ENCODE measurements at regions of chr19 and their contacts with region 1.

Region 1: GRCh38 chr19:15466851-15467733 is 2.7 kb upstream of the RASAL3 start:
- DNase-seq: peak; percentile 84
- H3K4me3 Mint-ChIP-seq: peak overlapping the region; percentile 41
- H3K27ac Mint-ChIP-seq: peak overlapping the region; percentile 93
- H3K4me1 Mint-ChIP-seq: peaks cover 52% of the 10 kb centered on the region
- H3K27me3 Mint-ChIP-seq: no peaks in the 10 kb centered on the region

Region 2: DNA sequence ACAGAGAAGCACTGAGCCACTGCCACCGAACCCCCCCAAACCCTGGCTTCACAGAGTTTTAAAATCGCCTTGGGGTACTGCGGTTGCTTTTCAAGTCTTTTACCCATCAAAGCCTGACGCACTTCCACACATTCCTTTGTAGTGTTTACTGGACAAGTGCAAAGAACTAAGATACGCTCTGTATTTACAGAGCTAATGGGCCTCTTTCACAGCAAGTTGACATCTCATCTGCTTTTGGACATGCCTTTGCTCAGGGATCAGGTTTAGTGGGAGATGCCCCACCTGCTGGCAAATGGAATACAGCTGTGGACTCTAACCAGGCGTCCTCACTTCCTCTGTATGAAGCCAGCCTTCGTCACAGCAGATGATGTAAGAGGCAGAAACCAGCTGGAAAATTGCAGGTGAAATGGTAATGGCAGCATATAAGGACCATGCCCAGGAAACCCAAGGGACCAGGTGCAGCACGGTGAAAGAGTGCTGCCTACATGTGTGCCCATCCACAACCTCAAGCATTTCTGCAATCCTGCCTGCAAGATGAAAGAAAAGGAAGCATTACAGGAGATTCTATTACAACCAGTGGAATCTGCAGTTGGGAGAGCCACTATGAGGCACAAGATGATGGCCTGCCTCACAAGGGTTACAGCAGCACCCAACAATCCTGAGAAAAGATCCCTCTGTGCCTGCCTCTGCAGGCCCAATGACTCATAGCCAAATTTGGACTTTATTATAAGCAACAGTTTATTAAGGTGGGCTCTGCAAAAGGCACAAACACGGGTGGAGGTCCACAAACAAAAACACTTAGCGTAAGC is 169.5 kb before region 1 on chr19:
- CTCF ChIA-PET with region 1: no interaction called
- POLR2A ChIA-PET with region 1: no interaction called
- intact Hi-C with region 1: loop called (anchors 1 kb)
- DNase-seq: peak; percentile 43
- H3K4me3 Mint-ChIP-seq: peak overlapping the region; percentile 33
- H3K27ac Mint-ChIP-seq: peak overlapping the region; percentile 95
- H3K4me1 Mint-ChIP-seq: peaks cover 98% of the 10 kb centered on the region
- H3K27me3 Mint-ChIP-seq: no peaks in the 10 kb centered on the region

Region 3: GRCh38 chr19:15404097-15404779 is 62.9 kb before region 1 on chr19:
- CTCF ChIA-PET with region 1: no interaction called
- POLR2A ChIA-PET with region 1: no interaction called
- intact Hi-C with region 1: no loop called
- DNase-seq: no peak
- H3K4me3 Mint-ChIP-seq: no peak overlapping the region
- H3K27ac Mint-ChIP-seq: no peak overlapping the region
- H3K4me1 Mint-ChIP-seq: peaks cover 30% of the 10 kb centered on the region
- H3K27me3 Mint-ChIP-seq: no peaks in the 10 kb centered on the region

Region 4: DNA sequence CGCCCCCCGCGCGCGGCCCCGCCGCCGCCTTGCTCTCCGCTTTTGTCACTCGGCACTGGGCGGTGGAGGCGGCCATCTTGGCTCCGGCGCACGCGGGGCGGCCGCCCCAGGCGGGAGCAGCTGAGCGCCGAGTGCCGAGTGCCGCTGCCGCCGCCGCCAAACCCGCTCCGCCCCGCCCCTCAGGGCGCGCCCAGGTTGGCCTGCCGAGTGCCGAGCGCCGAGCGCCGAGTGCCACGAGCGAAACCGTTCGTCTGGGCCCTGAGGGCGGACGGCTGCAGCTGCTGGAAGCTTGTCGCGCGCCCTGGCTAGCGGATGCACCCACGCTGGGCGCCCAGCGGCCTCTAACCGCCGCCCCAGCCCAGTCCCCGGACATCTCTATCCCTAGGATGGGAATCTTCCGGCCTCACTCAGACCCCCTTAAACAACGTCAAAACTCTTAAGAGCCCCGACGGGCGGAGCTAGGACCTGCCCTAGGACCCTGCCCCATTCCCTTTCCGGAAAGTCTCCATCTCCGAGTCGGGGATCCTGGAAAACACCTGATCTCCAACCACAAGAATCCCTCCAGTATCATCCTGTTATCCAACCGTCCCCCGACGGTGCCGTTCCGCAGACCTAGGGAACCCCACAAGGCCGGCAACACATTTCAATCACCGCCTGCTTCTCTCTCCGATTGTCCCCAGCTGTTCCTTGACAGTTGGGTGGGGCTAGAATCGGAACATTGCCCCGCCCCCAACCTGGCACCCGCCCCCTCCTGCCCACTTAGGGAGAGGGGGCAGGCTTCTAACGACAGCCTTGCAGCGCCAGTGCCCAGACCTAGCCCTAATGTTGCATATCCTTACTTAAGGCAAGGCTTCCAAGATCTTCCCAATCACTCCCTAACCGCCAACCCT is 34.2 kb before region 1 on chr19:
- CTCF ChIA-PET with region 1: interaction called, 4 read pairs
- POLR2A ChIA-PET with region 1: interaction called, 7 read pairs
- intact Hi-C with region 1: loop called (anchors 2 kb)
- DNase-seq: peak; percentile 95
- H3K4me3 Mint-ChIP-seq: peak overlapping the region; percentile 85
- H3K27ac Mint-ChIP-seq: peak overlapping the region; percentile 85
- H3K4me1 Mint-ChIP-seq: peaks cover 31% of the 10 kb centered on the region
- H3K27me3 Mint-ChIP-seq: no peaks in the 10 kb centered on the region

Region 5: GRCh38 chr19:15488489-15489224 is 21.6 kb after region 1 on chr19:
- CTCF ChIA-PET with region 1: no interaction called
- POLR2A ChIA-PET with region 1: no interaction called
- intact Hi-C with region 1: no loop called
- DNase-seq: no peak
- H3K4me3 Mint-ChIP-seq: no peak overlapping the region
- H3K27ac Mint-ChIP-seq: no peak overlapping the region
- H3K4me1 Mint-ChIP-seq: peaks cover 6% of the 10 kb centered on the region
- H3K27me3 Mint-ChIP-seq: no peaks in the 10 kb centered on the region

Region 6: DNA sequence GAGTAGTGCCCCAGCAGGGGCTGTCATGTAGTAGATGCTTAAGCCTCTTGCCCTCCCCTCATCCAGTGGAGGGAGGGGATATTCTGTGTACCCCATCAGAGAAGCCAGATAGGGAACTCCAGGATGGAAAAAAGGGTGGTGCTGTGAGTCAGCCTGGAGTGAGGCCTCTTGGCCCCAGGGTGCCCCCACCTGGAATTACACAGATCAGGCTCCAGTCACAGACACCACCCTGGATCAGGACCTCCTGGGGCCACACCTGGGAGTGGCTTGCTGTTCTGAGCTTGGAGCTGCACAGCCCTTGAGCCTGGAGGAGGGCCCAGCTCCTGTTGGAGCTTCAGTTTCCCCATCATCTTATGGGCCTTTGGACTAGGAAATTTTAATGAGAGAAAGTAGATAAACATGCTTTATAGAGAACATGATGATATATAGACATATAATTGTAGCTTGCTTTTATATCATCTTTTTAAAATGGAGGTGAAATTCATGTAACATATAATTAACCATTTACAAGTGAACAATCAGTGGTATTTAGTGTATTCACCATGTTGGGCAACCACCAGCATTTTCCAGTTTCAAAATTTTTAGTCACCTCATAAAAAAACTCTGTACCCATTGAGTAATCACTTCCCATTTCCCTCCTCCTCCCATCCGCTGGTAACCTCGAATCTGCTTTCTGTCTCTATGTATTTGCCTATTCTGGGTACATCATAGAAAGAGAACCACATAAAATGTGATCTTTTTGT is 65.9 kb after region 1 on chr19:
- CTCF ChIA-PET with region 1: interaction called, 4 read pairs
- POLR2A ChIA-PET with region 1: interaction called, 8 read pairs
- intact Hi-C with region 1: loop called (anchors 1 kb)
- DNase-seq: peak; percentile 43
- H3K4me3 Mint-ChIP-seq: no peak overlapping the region
- H3K27ac Mint-ChIP-seq: peak overlapping the region; percentile 43
- H3K4me1 Mint-ChIP-seq: peaks cover 29% of the 10 kb centered on the region
- H3K27me3 Mint-ChIP-seq: peaks cover 4% of the 10 kb centered on the region